ENCODE measurements at regions of chr4 and their contacts with region 1.

Region 1: DNA sequence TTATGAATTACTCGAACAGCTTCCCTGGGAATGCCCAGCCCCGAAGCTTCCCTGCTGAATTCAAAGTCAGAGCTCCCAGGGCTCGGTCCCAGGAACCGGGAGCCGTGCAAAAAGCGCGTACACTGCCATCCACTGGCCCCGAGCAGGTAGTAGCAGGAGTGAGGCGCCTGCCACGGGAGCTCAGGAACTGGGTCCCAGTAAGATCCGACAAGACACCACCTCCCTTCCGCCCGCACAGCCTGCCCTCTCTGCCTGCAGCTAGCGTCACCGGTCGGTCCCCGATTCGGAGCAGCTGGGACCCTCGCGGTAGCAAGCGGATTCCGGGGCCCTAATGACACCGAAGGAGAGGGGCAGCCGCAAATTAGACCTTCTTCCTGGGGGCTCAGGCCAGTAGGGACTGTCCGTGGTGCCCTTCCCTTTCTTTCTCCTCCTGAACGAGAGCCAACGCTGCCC is 1.2 kb downstream of the CORIN start:
- DNase-seq: peak; percentile 74
- H3K4me3 Mint-ChIP-seq: peak overlapping the region; percentile 76
- H3K27ac Mint-ChIP-seq: no peak overlapping the region
- H3K4me1 Mint-ChIP-seq: peaks cover 32% of the 10 kb centered on the region
- H3K27me3 Mint-ChIP-seq: peaks cover 3% of the 10 kb centered on the region

Region 2: GRCh38 chr4:47315346-47315745 is 521.3 kb before region 1 on chr4:
- CTCF ChIA-PET with region 1: no interaction called
- POLR2A ChIA-PET with region 1: no interaction called
- intact Hi-C with region 1: loop called (anchors 5 kb)
- DNase-seq: no peak
- H3K4me3 Mint-ChIP-seq: no peak overlapping the region
- H3K27ac Mint-ChIP-seq: no peak overlapping the region
- H3K4me1 Mint-ChIP-seq: no peaks in the 10 kb centered on the region
- H3K27me3 Mint-ChIP-seq: peaks cover 8% of the 10 kb centered on the region

Region 3: GRCh38 chr4:47642985-47643760 is 193.5 kb before region 1 on chr4:
- CTCF ChIA-PET with region 1: no interaction called
- POLR2A ChIA-PET with region 1: no interaction called
- intact Hi-C with region 1: no loop called
- DNase-seq: no peak
- H3K4me3 Mint-ChIP-seq: no peak overlapping the region
- H3K27ac Mint-ChIP-seq: no peak overlapping the region
- H3K4me1 Mint-ChIP-seq: no peaks in the 10 kb centered on the region
- H3K27me3 Mint-ChIP-seq: peaks cover 11% of the 10 kb centered on the region

Region 4: DNA sequence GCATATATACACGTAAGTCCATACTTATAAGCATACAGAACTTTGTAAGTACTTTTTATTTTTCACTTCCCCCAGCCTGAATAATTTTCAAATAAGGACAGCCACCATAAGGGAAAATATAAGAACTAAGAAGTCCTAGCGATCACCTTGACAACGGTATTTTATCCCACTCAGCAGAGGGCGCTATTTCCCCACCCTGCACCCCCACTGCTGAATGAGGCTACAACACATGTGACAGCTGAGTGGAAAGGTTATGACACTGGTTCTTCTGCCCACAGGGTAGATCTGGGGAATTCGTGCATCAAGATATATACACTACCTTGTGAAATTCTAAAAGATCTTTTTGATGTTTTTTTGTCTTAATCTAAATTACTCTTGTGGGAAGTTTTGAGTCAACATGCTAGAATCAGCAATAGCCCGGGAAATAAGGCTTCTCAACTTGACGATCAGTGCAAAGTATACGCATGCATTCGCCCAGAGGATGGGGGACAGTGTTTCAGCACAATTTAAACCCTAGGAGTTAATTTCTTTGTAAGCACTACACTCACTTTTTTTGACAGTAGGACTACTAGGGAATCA is 150.3 kb before region 1 on chr4:
- CTCF ChIA-PET with region 1: interaction called, 38 read pairs
- POLR2A ChIA-PET with region 1: no interaction called
- intact Hi-C with region 1: loop called (anchors 1 kb)
- DNase-seq: peak; percentile 81
- H3K4me3 Mint-ChIP-seq: no peak overlapping the region
- H3K27ac Mint-ChIP-seq: no peak overlapping the region
- H3K4me1 Mint-ChIP-seq: peaks cover 2% of the 10 kb centered on the region
- H3K27me3 Mint-ChIP-seq: peaks cover 8% of the 10 kb centered on the region

Region 5: DNA sequence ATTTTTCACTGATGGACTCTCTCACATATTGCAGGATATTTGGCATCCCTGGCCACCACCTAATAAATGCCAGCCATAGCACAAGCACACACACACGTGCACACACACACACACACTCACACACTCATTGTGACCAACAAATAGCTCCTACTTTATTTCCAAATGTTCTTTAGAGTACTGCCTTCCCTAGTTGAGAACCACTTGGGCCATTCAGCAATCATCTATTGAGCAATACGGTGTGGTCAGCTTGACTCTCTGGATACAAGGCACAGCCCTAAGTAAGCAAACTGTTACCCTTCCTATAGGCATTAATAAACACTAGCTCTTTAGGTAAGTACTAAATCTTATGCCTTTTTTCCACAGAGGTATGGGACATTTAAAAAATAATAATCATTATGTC is 19.9 kb before region 1 on chr4:
- CTCF ChIA-PET with region 1: interaction called, 5 read pairs
- POLR2A ChIA-PET with region 1: no interaction called
- intact Hi-C with region 1: loop called (anchors 2 kb)
- DNase-seq: no peak
- H3K4me3 Mint-ChIP-seq: no peak overlapping the region
- H3K27ac Mint-ChIP-seq: no peak overlapping the region
- H3K4me1 Mint-ChIP-seq: no peaks in the 10 kb centered on the region
- H3K27me3 Mint-ChIP-seq: peaks cover 16% of the 10 kb centered on the region

Region 6: GRCh38 chr4:47914220-47914925 is 77.7 kb after region 1 on chr4 and contains the start of gene NFXL1:
- CTCF ChIA-PET with region 1: interaction called, 4 read pairs
- POLR2A ChIA-PET with region 1: interaction called, 4 read pairs
- intact Hi-C with region 1: loop called (anchors 1 kb)
- DNase-seq: peak; percentile 98
- H3K4me3 Mint-ChIP-seq: peak within 1 kb of the TSS; percentile 97
- H3K27ac Mint-ChIP-seq: peak within 1 kb of the TSS; percentile 93
- H3K4me1 Mint-ChIP-seq: peaks cover 30% of the 10 kb centered on the region
- H3K27me3 Mint-ChIP-seq: no peaks in the 10 kb centered on the region
- total RNA-seq, gene NFXL1: 10.9 to 12.0 TPM

Region 7: DNA sequence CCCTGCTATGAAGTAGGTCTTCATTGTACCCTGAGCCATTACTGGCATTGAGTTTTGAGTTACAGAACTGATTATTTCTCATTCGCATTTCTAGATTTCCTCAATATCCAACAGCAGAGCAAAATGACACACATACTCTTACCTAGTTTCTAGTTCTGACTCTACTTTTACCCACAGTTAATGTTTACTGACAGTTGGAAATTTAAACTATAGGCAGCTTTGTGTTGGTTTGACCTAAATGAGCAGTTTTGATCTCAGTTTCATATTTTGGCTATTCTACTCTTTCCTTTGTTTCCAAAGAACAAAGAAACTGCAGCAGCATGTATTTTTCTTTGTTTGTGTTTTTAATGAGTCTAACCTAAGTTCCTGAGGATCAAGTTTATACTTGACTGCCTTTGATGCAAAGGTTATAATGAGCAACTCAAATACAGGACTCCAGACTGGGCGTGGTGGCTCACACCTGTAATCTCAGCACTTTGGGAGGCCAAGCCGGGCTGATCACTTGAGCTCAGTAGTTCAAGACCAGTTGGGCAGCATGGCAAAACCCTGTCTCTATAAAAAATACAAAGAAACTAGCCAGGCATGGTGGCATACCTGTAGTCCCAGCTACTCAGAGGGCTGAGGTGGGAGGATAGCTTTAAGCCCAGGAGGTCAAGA is 266.9 kb after region 1 on chr4:
- CTCF ChIA-PET with region 1: no interaction called
- POLR2A ChIA-PET with region 1: no interaction called
- intact Hi-C with region 1: loop called (anchors 1 kb)
- DNase-seq: peak; percentile 60
- H3K4me3 Mint-ChIP-seq: no peak overlapping the region
- H3K27ac Mint-ChIP-seq: peak overlapping the region; percentile 83
- H3K4me1 Mint-ChIP-seq: peaks cover 30% of the 10 kb centered on the region
- H3K27me3 Mint-ChIP-seq: no peaks in the 10 kb centered on the region

Region 8: GRCh38 chr4:48944756-48945241 is 1108.1 kb after region 1 on chr4:
- CTCF ChIA-PET with region 1: no interaction called
- POLR2A ChIA-PET with region 1: no interaction called
- intact Hi-C with region 1: no loop called
- DNase-seq: peak; percentile 65
- H3K4me3 Mint-ChIP-seq: no peak overlapping the region
- H3K27ac Mint-ChIP-seq: no peak overlapping the region
- H3K4me1 Mint-ChIP-seq: peaks cover 9% of the 10 kb centered on the region
- H3K27me3 Mint-ChIP-seq: peaks cover 2% of the 10 kb centered on the region

Measured in activated CD4-positive, alpha-beta memory T cell treated with anti-CD3 and anti-CD28 coated beads for 36 hours (primary cell).